ENCODE measurements at regions of chr16 and their contacts with region 1.

Region 1: DNA sequence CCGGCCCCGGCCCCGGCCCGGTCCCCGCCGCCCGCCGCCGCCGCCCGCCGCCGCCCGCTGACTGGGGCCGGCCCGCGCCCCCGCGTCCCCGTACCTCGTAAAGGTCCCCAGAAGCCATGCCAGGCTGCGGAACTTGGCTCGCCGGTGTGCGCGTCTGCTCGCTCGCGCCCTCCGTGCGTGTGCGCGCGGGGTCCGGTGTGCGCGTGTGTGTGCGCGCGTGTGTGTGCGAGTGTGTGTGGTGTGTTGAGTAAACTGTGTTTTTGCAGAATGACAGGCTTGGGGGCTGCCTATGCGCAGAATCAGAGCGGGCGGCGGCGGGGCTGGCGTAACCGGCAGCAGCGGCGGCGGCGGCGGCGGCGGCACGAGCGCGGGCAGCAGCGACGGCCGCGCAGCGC is 345 bp downstream of the CDYL2 start:
- DNase-seq: peak; percentile 22 to 75 (median 57)
- ATAC-seq: peak; percentile 64
- H3K4me3 ChIP-seq: peak overlapping the region in 1 of 2 experiments; percentile 56
- H3K4me3 Mint-ChIP-seq: peak overlapping the region; percentile 93
- H3K27ac ChIP-seq: no peak overlapping the region
- H3K27ac Mint-ChIP-seq: peak overlapping the region; percentile 77
- H3K4me1 ChIP-seq: no peaks in the 10 kb centered on the region
- H3K4me1 Mint-ChIP-seq: peaks cover 20% of the 10 kb centered on the region
- H3K27me3 ChIP-seq: no peaks in the 10 kb centered on the region
- H3K27me3 Mint-ChIP-seq: peaks cover 2% of the 10 kb centered on the region
- CTCF ChIP-seq: no peak

Region 2: GRCh38 chr16:80664226-80664625 is 139.8 kb before region 1 on chr16:
- CTCF ChIA-PET with region 1: no interaction called
- POLR2A ChIA-PET with region 1: no interaction called
- intact Hi-C with region 1: loop called in 1 of 2 experiments (anchors 5 kb)
- DNase-seq: no peak
- ATAC-seq: no peak
- H3K4me3 ChIP-seq: no peak overlapping the region
- H3K4me3 Mint-ChIP-seq: no peak overlapping the region
- H3K27ac ChIP-seq: no peak overlapping the region
- H3K27ac Mint-ChIP-seq: no peak overlapping the region
- H3K4me1 ChIP-seq: no peaks in the 10 kb centered on the region
- H3K4me1 Mint-ChIP-seq: peaks cover 4% of the 10 kb centered on the region
- H3K27me3 ChIP-seq: no peaks in the 10 kb centered on the region
- H3K27me3 Mint-ChIP-seq: no peaks in the 10 kb centered on the region
- CTCF ChIP-seq: no peak

Region 3: GRCh38 chr16:80746231-80746630 is 57.8 kb before region 1 on chr16:
- CTCF ChIA-PET with region 1: no interaction called
- POLR2A ChIA-PET with region 1: no interaction called
- intact Hi-C with region 1: no loop called
- DNase-seq: no peak
- ATAC-seq: no peak
- H3K4me3 ChIP-seq: no peak overlapping the region
- H3K4me3 Mint-ChIP-seq: no peak overlapping the region
- H3K27ac ChIP-seq: no peak overlapping the region
- H3K27ac Mint-ChIP-seq: no peak overlapping the region
- H3K4me1 ChIP-seq: peaks cover 7% of the 10 kb centered on the region
- H3K4me1 Mint-ChIP-seq: peaks cover 25% of the 10 kb centered on the region
- H3K27me3 ChIP-seq: no peaks in the 10 kb centered on the region
- H3K27me3 Mint-ChIP-seq: no peaks in the 10 kb centered on the region
- CTCF ChIP-seq: no peak

Region 4: DNA sequence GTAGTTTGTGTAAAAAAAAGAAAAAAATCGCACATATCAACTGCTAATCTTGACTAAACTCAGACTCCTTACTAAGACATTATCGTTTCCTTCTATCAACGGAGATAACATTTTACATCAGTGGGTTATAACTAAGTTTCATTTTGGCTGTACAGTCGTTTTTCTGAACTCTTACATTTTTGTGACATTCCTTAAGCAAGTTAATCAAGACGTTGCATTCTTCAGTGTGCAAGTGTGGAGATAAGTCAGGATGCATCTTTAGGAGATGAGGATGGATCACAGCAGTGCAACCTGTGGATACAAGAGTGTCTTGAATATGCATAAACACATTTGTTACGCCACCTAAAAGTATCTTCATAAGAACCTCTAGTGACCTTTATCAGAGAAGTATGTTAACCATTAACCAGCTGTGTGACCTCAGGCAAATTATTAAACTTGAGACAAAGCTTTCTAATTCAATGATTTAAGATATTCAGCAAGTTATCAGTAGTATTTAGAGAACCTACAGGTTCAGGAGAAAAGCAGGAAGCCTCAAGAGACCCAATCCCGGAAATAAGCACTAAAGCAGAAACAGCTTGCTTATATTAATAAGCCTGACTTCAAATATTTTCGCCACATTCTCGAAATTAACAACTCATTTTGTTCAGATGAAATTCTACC is 193.2 kb after region 1 on chr16:
- CTCF ChIA-PET with region 1: no interaction called
- POLR2A ChIA-PET with region 1: no interaction called
- intact Hi-C with region 1: loop called in 1 of 2 experiments (anchors 10 kb)
- DNase-seq: peak in 1 of 9 experiments; percentile 44
- ATAC-seq: peak; percentile 48
- H3K4me3 ChIP-seq: peak overlapping the region; percentile 47 to 54
- H3K4me3 Mint-ChIP-seq: peak overlapping the region; percentile 86
- H3K27ac ChIP-seq: peak overlapping the region; percentile 58 to 61
- H3K27ac Mint-ChIP-seq: peak overlapping the region; percentile 91
- H3K4me1 ChIP-seq: peaks cover 9% of the 10 kb centered on the region
- H3K4me1 Mint-ChIP-seq: peaks cover 64% of the 10 kb centered on the region
- H3K27me3 ChIP-seq: no peaks in the 10 kb centered on the region
- H3K27me3 Mint-ChIP-seq: no peaks in the 10 kb centered on the region
- CTCF ChIP-seq: no peak